ENCODE measurements at regions of chr1 and their contacts with region 1.

Region 1: GRCh38 chr1:115771847-115772457 is 3.4 kb upstream of the CASQ2 start:
- DNase-seq: peak; percentile 74 to 82
- H3K4me3 ChIP-seq: peak overlapping the region; percentile 8; the same call in 1 of the 2 replicates
- H3K27ac ChIP-seq: no peak overlapping the region
- H3K4me1 ChIP-seq: peaks cover 7% of the 10 kb centered on the region
- H3K27me3 ChIP-seq: no peaks in the 10 kb centered on the region
- CTCF ChIP-seq: peak; percentile 95

Region 2: GRCh38 chr1:115463363-115463746 is 308.6 kb before region 1 on chr1:
- CTCF ChIA-PET with region 1: no interaction called
- POLR2A ChIA-PET with region 1: no interaction called
- intact Hi-C with region 1: loop called (anchors 1 kb)
- DNase-seq: peak in 1 of 2 experiments; percentile 56
- H3K4me3 ChIP-seq: no peak overlapping the region
- H3K27ac ChIP-seq: no peak overlapping the region
- H3K4me1 ChIP-seq: peaks cover 50% of the 10 kb centered on the region
- H3K27me3 ChIP-seq: no peaks in the 10 kb centered on the region
- CTCF ChIP-seq: peak; percentile 87

Region 3: GRCh38 chr1:115545791-115546733 is 225.9 kb before region 1 on chr1:
- CTCF ChIA-PET with region 1: no interaction called
- POLR2A ChIA-PET with region 1: no interaction called
- intact Hi-C with region 1: loop called (anchors 1 kb)
- DNase-seq: peak; percentile 92 to 99
- H3K4me3 ChIP-seq: peak overlapping the region; percentile 9; the same call in 1 of the 2 replicates
- H3K27ac ChIP-seq: peak overlapping the region; percentile 91
- H3K4me1 ChIP-seq: peaks cover 35% of the 10 kb centered on the region
- H3K27me3 ChIP-seq: no peaks in the 10 kb centered on the region
- CTCF ChIP-seq: peak; percentile 82

Region 4: GRCh38 chr1:115609021-115609420 is 162.9 kb before region 1 on chr1:
- CTCF ChIA-PET with region 1: interaction called, 3 read pairs
- POLR2A ChIA-PET with region 1: no interaction called
- intact Hi-C with region 1: loop called (anchors 1 kb)
- DNase-seq: peak in 1 of 2 experiments; percentile 73
- H3K4me3 ChIP-seq: no peak overlapping the region
- H3K27ac ChIP-seq: no peak overlapping the region
- H3K4me1 ChIP-seq: peaks cover 17% of the 10 kb centered on the region
- H3K27me3 ChIP-seq: no peaks in the 10 kb centered on the region
- CTCF ChIP-seq: no peak

Region 5: GRCh38 chr1:115793162-115793561 is 21.2 kb after region 1 on chr1:
- CTCF ChIA-PET with region 1: no interaction called
- POLR2A ChIA-PET with region 1: no interaction called
- intact Hi-C with region 1: no loop called
- DNase-seq: no peak
- H3K4me3 ChIP-seq: no peak overlapping the region
- H3K27ac ChIP-seq: no peak overlapping the region
- H3K4me1 ChIP-seq: peaks cover 8% of the 10 kb centered on the region
- H3K27me3 ChIP-seq: no peaks in the 10 kb centered on the region
- CTCF ChIP-seq: no peak

Region 6: DNA sequence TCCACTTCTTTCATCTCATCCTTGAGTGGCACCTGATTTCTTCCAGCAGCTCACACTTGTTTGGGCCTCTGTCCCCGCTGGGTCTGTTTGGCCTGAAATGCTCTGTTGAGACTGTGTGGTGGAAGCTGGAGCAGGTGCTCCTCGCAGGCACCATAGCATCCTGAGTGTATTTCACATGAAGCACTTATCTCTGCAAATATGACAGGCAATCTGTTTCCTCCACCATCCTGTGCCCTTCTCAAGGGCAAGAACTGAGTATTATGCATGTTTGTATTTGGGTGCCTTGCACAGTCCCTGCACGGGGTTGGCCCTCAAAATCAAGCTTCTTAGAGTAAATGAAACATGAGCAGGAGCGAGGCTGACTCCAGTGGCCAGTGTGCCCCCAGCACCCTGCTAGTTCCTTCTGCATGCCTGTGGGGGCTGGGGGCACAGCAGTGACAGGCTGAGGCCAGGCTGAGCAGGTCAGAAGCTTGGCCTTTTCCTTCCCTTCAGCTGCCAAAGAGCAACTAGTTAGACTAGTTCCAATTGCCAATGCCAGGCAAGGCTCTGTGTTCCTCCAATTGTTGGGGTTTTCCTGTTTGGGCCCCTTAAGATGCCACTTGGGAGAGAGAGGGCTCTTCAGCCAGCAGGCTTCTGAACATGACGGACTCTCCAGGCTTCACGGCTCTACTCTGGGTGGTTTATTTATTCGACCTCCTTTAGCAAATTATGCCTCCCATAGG is 471.5 kb after region 1 on chr1:
- CTCF ChIA-PET with region 1: no interaction called
- POLR2A ChIA-PET with region 1: no interaction called
- intact Hi-C with region 1: no loop called
- DNase-seq: no peak
- H3K4me3 ChIP-seq: no peak overlapping the region
- H3K27ac ChIP-seq: no peak overlapping the region
- H3K4me1 ChIP-seq: peaks cover 18% of the 10 kb centered on the region
- H3K27me3 ChIP-seq: no peaks in the 10 kb centered on the region
- CTCF ChIP-seq: no peak